ENCODE measurements at regions of chr5 and their contacts with region 1.

Region 1: GRCh38 chr5:103139264-103139865 is 19.3 kb downstream of the PPIP5K2 start:
- DNase-seq: peak; percentile 88
- ATAC-seq: peak; percentile 93
- H3K4me3 Mint-ChIP-seq: no peak overlapping the region
- H3K27ac Mint-ChIP-seq: no peak overlapping the region
- H3K4me1 Mint-ChIP-seq: no peaks in the 10 kb centered on the region
- H3K27me3 Mint-ChIP-seq: no peaks in the 10 kb centered on the region

Region 2: DNA sequence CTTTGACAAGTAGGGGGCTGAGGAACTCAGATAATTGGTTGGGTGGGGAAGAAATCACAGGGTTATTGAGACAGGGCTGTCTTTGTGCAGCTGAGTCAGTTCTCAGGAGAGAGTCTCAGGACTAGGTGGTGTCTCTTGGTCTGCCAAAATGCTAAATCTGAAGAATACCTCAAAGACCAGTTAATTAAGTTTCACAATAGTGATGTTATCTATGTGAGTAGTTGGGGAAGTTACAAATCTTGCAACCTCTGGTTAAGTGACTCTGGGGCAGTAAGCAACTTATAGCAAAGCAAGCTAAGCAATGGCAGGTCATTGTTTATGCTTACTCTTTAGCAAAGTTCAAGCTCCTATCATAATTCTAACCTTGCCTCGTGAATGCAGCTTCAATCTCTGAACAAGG is 73.0 kb before region 1 on chr5:
- CTCF ChIA-PET with region 1: interaction called, 13 read pairs
- POLR2A ChIA-PET with region 1: no interaction called
- DNase-seq: no peak
- ATAC-seq: no peak
- H3K4me3 Mint-ChIP-seq: no peak overlapping the region
- H3K27ac Mint-ChIP-seq: no peak overlapping the region
- H3K4me1 Mint-ChIP-seq: no peaks in the 10 kb centered on the region
- H3K27me3 Mint-ChIP-seq: peaks cover 4% of the 10 kb centered on the region

Region 3: DNA sequence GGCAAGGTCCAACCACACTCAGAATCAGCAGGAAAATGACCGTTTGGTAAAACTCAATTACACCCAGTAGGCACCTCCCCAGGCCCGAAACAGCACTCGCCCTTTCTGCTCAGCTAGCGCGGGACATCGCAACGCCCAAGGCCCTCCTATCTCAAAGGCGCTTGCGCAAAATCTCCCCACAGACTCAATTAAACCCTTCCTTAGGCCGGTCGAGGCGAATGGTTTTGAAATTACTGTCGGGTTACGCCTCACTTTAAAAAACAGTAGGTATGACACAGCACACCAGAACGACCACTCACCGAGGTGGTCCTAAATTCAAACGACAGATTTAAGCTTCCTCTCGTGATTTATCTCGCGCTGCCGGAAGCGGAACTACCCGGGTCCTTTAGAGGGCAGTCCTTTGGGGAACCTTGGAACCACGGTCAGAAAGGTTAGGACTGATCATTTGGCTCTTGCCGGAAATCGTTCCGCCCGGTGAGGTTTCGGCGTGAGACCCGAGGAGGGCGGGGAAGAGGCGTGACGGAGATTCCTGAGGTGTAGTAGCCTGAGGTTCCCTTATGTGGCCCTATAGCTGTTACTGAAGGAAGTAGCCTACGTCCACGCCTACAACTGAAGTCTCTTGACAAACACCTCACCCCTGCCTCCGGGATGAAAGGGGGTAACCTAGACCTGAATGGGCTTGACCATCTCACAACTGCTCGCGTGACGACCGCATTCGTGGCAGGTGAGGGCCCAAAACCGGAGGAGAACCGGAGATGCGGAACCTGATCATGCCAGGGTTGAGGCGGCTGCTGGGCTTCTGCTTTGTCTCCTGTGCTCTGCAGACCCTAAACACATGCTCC is 19.4 kb before region 1 on chr5 and contains the starts of genes GIN1 and PPIP5K2:
- CTCF ChIA-PET with region 1: interaction called, 10 read pairs
- POLR2A ChIA-PET with region 1: interaction called, 4 read pairs
- DNase-seq: peak; percentile 97
- ATAC-seq: peak; percentile 93
- H3K4me3 Mint-ChIP-seq: peak within 1 kb of the TSS; percentile 85
- H3K27ac Mint-ChIP-seq: peak within 1 kb of the TSS; percentile 96
- H3K4me1 Mint-ChIP-seq: peaks cover 31% of the 10 kb centered on the region
- H3K27me3 Mint-ChIP-seq: no peaks in the 10 kb centered on the region
- total RNA-seq, gene GIN1: 7.5 to 14.9 TPM
- total RNA-seq, gene PPIP5K2: 65.7 to 68.2 TPM

Region 4: DNA sequence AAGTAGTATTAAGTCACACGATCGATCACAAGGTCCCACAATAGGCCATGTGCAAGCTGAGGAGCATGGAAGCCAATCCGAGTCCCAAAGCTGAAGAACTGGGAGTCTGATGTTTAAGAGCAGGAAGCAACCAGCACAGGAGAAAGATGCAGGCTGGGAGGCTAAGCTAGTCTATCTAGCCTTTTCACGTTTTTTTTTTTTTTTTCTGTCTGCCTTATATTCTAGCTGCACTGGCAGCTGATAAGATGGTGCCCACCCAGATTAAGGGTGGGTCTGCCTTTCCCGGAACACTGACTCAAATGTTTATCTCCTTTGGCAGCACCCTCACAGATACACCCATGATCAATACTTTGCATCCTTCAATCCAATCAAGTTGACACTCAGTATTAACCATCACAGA is 12.8 kb before region 1 on chr5:
- CTCF ChIA-PET with region 1: interaction called, 11 read pairs
- POLR2A ChIA-PET with region 1: no interaction called
- DNase-seq: no peak
- ATAC-seq: no peak
- H3K4me3 Mint-ChIP-seq: no peak overlapping the region
- H3K27ac Mint-ChIP-seq: no peak overlapping the region
- H3K4me1 Mint-ChIP-seq: peaks cover 18% of the 10 kb centered on the region
- H3K27me3 Mint-ChIP-seq: no peaks in the 10 kb centered on the region

Region 5: DNA sequence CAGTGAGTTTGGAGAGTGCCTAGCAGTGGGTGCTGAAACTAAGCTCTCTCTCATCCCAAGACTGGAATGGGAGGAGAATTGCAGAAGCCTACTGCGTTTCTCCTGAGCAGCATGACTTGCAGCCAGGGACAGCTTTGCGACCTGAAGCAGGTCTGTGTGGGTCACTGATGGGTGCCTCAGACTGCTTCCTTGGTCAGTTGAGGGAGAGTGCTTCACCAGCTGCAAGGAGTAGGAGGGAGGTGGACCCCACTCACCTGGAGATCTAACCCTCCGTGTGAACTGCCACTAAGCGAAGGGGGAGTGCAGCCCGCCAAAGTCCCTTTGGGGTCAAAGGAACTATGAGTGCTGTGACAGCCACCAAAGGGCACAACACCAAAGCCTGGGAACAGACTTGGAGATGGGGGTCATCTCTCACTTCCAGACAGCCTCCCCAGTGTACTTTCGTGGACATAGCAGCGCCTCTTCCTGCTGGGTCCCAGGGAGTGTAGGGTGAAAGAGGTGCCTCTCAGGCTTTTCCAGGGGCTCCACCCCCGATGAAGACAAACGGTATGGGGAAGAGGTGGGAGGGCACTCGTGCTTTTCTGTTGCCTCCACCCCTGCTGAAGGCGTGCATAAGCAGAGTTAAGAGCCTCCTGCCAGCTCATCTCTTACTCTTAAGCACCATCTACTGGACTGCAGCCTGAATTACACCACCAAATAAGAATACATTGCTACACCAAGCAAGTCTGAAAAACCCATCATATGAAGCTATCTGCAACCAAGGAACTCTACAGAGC is 84.9 kb after region 1 on chr5:
- CTCF ChIA-PET with region 1: interaction called, 21 read pairs
- POLR2A ChIA-PET with region 1: no interaction called
- DNase-seq: peak; percentile 78
- ATAC-seq: peak; percentile 94
- H3K4me3 Mint-ChIP-seq: no peak overlapping the region
- H3K27ac Mint-ChIP-seq: peak overlapping the region; percentile 23
- H3K4me1 Mint-ChIP-seq: peaks cover 10% of the 10 kb centered on the region
- H3K27me3 Mint-ChIP-seq: peaks cover 28% of the 10 kb centered on the region